Lower leg skin (tissue), 4 donors: ENCODE measurements at regions of chr1 and their contacts with region 1.

Region 1: GRCh38 chr1:225111000-225111399 is 181.5 kb downstream of the DNAH14 start:
- DNase-seq: no peak
- H3K4me3 ChIP-seq: no peak overlapping the region
- CTCF ChIP-seq: no peak
- POLR2A ChIP-seq: no peak

Region 2: DNA sequence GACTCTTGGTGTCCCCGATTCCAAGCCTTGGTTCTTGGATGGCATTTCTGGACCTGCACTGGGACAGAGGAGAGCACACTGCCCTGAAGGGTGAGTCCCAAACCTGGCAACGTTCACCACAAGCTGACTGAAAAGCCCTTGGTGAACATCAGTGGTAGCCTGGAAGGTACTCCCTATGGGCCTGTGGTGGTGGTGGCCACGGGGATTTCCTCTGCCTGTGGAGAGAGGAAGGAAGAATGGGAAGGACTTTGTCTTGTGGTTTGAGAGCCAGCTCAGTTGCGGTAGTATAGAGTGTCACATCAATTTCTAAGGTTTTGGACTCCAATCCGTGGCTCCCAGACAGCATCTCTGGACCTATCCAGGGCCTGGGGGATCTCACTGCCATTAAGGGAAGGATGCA is 130.8 kb before region 1 on chr1:
- intact Hi-C with region 1: loop called (anchors 2 kb)
- DNase-seq: no peak
- H3K4me3 ChIP-seq: no peak overlapping the region
- CTCF ChIP-seq: no peak
- POLR2A ChIP-seq: no peak